ENCODE measurements at regions of chr14 and their contacts with region 1.

Region 1: GRCh38 chr14:21917699-21918436 is 244.2 kb upstream of the OR4E1 start:
- DNase-seq: peak in 7 of 9 donors; percentile 60 to 73 (median 64)
- ATAC-seq: peak; percentile 78
- H3K4me3 ChIP-seq: peak overlapping the region; percentile 49
- H3K4me3 Mint-ChIP-seq: peak overlapping the region; percentile 64 to 93 (median 84)
- H3K27ac ChIP-seq: peak overlapping the region; percentile 44
- H3K27ac Mint-ChIP-seq: peak overlapping the region; percentile 76 to 94 (median 85)
- H3K4me1 ChIP-seq: peaks cover 10 to 49% of the 10 kb centered on the region in 2 donors
- H3K4me1 Mint-ChIP-seq: peaks cover 12 to 83% (median 68%) of the 10 kb centered on the region in 7 donors
- H3K27me3 ChIP-seq: no peaks in the 10 kb centered on the region
- H3K27me3 Mint-ChIP-seq: no peaks in the 10 kb centered on the region

Region 2: DNA sequence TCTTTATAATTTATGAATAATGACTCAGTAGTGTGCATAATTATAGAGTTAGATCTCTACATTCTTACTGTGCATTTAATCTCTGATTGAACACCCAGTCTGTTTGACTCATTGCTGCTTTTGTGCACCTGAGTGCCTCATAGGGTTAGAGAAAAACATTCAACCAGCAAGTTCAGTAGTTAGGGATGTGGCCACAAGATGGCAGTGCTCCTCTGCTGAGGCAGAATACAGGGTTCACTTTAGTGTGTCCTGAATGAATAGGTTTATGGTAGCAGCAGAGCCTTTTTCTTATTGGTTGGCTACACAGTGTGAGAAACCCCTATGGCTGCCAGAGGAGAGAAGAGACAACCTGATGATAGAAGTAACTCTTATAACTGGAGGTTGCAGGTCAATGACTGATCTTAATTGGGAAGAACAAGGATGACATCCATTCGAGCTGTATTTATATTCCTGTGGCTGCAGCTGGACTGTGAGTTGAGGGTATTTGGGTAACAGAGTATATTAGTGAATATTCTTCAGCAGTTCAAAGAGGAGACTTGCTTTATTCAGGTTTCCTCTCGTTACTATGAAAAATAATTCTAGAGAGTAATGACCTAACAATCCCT is 49.3 kb before region 1 on chr14:
- CTCF ChIA-PET with region 1: interaction called, 12 read pairs
- POLR2A ChIA-PET with region 1: no interaction called
- intact Hi-C with region 1: loop called (anchors 1 kb)
- DNase-seq: peak; percentile 33 to 79 (median 70)
- ATAC-seq: peak; percentile 97
- H3K4me3 ChIP-seq: peak overlapping the region; percentile 16
- H3K4me3 Mint-ChIP-seq: peak overlapping the region; percentile 18 to 85 (median 74)
- H3K27ac ChIP-seq: peak overlapping the region; percentile 25
- H3K27ac Mint-ChIP-seq: peak overlapping the region; percentile 8 to 88 (median 59)
- H3K4me1 ChIP-seq: peaks cover 4 to 8% of the 10 kb centered on the region in 2 donors
- H3K4me1 Mint-ChIP-seq: peaks cover 3 to 54% (median 25%) of the 10 kb centered on the region in 7 donors
- H3K27me3 ChIP-seq: peaks cover 0 to 3% of the 10 kb centered on the region in 2 donors
- H3K27me3 Mint-ChIP-seq: peaks cover 0 to 6% (median 0%) of the 10 kb centered on the region in 5 donors

Region 3: DNA sequence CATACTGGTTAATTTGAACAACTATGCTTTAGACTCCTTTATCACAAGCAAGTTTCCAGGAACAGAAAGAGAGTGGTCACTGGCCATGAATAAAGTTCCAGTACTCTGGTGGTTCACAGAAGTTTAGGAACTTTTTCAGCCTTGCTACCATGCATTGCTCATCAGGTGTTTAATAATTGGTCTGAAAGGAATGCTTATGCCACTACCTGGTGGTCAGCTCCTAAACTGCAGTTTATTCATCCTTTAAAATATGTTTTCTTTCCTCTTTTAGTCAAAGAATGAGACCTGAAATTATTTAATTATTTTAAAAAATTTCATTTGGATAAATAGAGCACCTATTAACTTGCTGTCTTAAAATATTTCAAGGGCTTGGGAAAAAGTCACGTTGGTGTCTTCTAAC is 15.8 kb after region 1 on chr14:
- CTCF ChIA-PET with region 1: interaction called, 30 read pairs
- POLR2A ChIA-PET with region 1: interaction called, 10 read pairs
- intact Hi-C with region 1: loop called (anchors 1 kb)
- DNase-seq: peak in 2 of 9 donors; percentile 26 to 38
- ATAC-seq: no peak
- H3K4me3 ChIP-seq: no peak overlapping the region
- H3K4me3 Mint-ChIP-seq: no peak overlapping the region
- H3K27ac ChIP-seq: no peak overlapping the region
- H3K27ac Mint-ChIP-seq: no peak overlapping the region
- H3K4me1 ChIP-seq: no peaks in the 10 kb centered on the region
- H3K4me1 Mint-ChIP-seq: peaks cover 2 to 30% (median 21%) of the 10 kb centered on the region in 7 donors
- H3K27me3 ChIP-seq: no peaks in the 10 kb centered on the region
- H3K27me3 Mint-ChIP-seq: peaks cover 0 to 20% (median 0%) of the 10 kb centered on the region in 5 donors

Region 4: DNA sequence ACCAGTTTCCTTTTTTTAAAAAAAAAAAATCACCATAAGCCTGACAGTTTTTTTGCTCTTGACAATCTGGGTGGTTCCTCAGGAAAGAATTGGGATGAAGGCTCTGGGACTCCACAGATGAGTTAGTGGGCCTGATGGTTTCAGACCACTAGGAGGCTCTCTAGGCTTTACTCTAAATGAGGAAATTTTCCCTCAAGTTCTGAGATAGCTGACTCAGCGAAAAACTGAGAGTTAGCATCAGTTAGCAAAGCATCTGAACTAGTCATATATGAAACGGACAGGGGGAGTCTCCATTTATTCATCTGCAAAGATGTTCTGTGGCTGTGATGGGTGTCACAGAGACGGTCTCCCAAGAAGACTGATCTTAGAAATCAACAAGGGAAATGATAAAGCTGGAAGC is 70.1 kb after region 1 on chr14:
- CTCF ChIA-PET with region 1: interaction called, 6 read pairs
- POLR2A ChIA-PET with region 1: interaction called, 3 read pairs
- intact Hi-C with region 1: loop called in 1 of 2 experiments (anchors 2 kb)
- DNase-seq: peak in 1 of 9 donors; percentile 13
- ATAC-seq: peak; percentile 54
- H3K4me3 ChIP-seq: no peak overlapping the region
- H3K4me3 Mint-ChIP-seq: peak overlapping the region in 5 of 10 donors; percentile 16 to 60 (median 22)
- H3K27ac ChIP-seq: no peak overlapping the region
- H3K27ac Mint-ChIP-seq: peak overlapping the region in 5 of 9 donors; percentile 25 to 74 (median 45)
- H3K4me1 ChIP-seq: no peaks in the 10 kb centered on the region
- H3K4me1 Mint-ChIP-seq: peaks cover 0 to 31% (median 11%) of the 10 kb centered on the region in 7 donors
- H3K27me3 ChIP-seq: no peaks in the 10 kb centered on the region
- H3K27me3 Mint-ChIP-seq: peaks cover 0 to 17% (median 0%) of the 10 kb centered on the region in 5 donors

Region 5: DNA sequence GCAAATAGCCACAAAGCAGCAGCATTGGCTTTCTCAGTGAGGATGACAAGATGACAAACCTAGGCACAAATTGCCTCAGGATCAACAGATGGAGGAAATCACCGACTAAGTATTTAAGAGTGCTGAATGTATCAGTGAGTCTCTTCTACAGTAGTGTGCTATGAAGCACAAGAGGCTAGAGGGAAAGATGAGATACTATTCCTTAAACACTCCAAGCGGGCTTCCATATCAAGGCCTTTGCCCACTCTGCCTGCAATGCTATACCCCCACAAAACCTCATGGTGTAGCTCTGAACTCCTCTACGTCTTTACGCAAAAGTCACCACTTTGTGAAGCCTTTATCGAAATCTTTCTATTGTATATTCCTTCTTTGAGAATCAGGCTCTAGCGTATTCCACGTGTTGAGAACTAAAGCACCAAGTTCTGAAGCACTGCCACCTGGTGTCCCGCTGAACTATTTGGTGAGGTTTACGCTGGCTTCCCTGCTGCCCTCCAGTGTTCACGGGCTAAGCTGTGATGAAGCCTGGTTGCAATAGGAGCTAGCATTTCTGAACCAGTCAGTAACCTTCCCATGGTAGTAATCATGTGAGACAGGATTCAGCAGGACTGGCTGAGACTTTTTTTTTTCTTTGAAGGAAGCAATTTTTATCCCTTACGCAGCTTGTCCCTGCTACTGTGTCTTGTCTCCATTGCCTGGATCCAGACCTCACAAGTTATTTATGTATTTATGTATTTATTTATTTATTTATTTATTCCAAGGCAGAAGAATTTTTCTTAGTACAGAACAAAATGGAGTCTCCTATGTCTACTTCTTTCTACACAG is 182.3 kb after region 1 on chr14:
- CTCF ChIA-PET with region 1: no interaction called
- POLR2A ChIA-PET with region 1: no interaction called
- intact Hi-C with region 1: loop called in 1 of 2 experiments (anchors 5 kb)
- DNase-seq: peak in 8 of 9 donors; percentile 31 to 74 (median 56)
- ATAC-seq: peak; percentile 83
- H3K4me3 ChIP-seq: no peak overlapping the region
- H3K4me3 Mint-ChIP-seq: peak overlapping the region in 3 of 10 donors; percentile 47 to 53 (median 48)
- H3K27ac ChIP-seq: no peak overlapping the region
- H3K27ac Mint-ChIP-seq: peak overlapping the region in 2 of 9 donors; percentile 25 to 49
- H3K4me1 ChIP-seq: peaks cover 3 to 29% of the 10 kb centered on the region in 2 donors
- H3K4me1 Mint-ChIP-seq: peaks cover 1 to 62% (median 48%) of the 10 kb centered on the region in 7 donors
- H3K27me3 ChIP-seq: no peaks in the 10 kb centered on the region
- H3K27me3 Mint-ChIP-seq: no peaks in the 10 kb centered on the region

Region 6: GRCh38 chr14:22852940-22853767 is 935.3 kb after region 1 on chr14:
- CTCF ChIA-PET with region 1: interaction called, 3 read pairs
- POLR2A ChIA-PET with region 1: no interaction called
- intact Hi-C with region 1: loop called (anchors 2 to 10 kb)
- DNase-seq: peak; percentile 75 to 94 (median 87)
- ATAC-seq: peak; percentile 96
- H3K4me3 ChIP-seq: peak overlapping the region; percentile 74
- H3K4me3 Mint-ChIP-seq: peak overlapping the region; percentile 81 to 89 (median 86)
- H3K27ac ChIP-seq: peak overlapping the region; percentile 72
- H3K27ac Mint-ChIP-seq: peak overlapping the region in 7 of 9 donors; percentile 71 to 85 (median 81)
- H3K4me1 ChIP-seq: peaks cover 3% of the 10 kb centered on the region in 2 donors
- H3K4me1 Mint-ChIP-seq: peaks cover 8 to 30% (median 21%) of the 10 kb centered on the region in 7 donors
- H3K27me3 ChIP-seq: no peaks in the 10 kb centered on the region
- H3K27me3 Mint-ChIP-seq: peaks cover 0 to 19% (median 6%) of the 10 kb centered on the region in 5 donors

Measured in naive thymus-derived CD4-positive, alpha-beta T cell (primary cell).